Activated CD4-positive, alpha-beta T cell treated with anti-CD3 and anti-CD28 coated beads, Interleukin-2, amount 10 ng/mL, durations not matched to agents 7 days and 5 days (primary cell): ENCODE measurements at regions of chr3 and their contacts with region 1.

Region 1: DNA sequence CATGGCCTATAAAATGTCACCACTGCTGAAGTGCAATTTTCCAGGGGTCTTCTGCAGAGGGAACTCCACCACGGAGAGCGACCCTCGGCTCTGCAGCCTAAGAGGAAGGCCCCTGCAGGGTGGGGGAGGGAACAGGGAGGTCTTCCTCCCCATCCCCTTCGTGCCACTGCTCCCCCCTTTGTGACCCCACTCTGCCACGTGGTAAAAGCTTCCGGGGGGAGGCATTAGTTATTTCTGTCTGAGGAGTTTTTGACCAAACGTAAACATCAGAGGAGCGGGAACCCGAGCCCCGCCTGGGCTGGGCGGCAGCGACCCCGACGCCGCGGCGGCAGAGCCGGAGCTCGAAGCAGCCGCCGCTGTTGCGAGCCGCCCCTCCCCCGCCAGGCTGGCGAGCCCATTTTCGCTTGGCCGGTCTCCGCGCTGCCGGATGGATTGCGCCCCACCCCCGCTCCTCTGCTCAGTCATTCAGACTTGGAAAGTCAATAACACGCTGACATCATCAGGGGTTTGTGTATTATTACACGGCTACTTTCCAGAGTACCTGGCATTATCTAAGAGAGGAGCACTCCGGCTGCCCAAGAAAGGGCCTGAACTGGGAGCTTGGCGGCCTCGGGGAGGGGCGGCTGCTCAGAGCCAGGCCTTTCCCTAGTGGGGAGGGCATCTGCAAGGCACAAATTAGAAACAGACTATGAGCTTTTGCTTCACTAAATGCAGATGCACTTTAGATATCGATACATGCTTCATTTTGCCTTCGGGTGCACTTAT is 162.5 kb upstream of the TBL1XR1 start:
- DNase-seq: peak; percentile 93
- H3K4me3 Mint-ChIP-seq: peak overlapping the region; percentile 80
- H3K27ac Mint-ChIP-seq: peak overlapping the region; percentile 99
- H3K4me1 Mint-ChIP-seq: peaks cover 55% of the 10 kb centered on the region
- H3K27me3 Mint-ChIP-seq: no peaks in the 10 kb centered on the region

Region 2: DNA sequence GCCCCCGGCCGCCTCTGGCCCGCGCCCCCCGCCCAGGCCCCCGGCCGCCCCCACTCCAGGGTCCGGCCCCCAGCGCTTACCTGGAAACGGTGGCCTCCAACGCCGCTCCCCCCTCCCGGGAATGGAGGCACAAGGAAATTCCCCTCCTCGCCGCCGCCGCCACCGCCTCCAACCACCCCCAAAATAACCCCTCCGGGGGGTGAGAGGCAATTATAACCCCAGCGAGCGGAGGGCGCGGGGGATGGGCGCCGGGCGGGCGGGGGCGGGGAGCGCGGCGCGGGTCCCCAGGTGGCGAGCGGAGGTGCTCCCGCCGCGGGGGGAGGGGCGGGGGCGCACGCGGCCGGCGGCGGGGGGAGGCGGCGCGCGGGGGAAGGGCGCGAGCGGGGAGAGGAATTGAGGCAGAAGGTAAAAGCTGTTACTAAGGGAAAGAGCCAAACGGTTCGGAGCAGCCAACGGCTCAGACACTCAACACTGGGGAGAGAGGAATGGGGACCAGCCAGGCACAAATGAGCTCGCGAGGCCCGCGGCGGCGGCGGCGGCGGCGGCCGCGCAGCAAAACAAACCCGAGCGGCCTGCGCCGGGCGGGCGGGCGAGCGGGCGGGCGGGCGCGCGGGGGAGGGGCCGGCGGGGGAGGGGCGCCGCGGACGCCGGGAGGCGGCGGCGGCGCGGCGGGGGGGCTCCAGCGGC is 162.6 kb before region 1 on chr3 and contains the start of gene TBL1XR1:
- CTCF ChIA-PET with region 1: interaction called, 9 read pairs
- POLR2A ChIA-PET with region 1: interaction called, 13 read pairs
- DNase-seq: peak; percentile 91
- H3K4me3 Mint-ChIP-seq: peak within 1 kb of the TSS; percentile 99
- H3K27ac Mint-ChIP-seq: peak within 1 kb of the TSS; percentile 100
- H3K4me1 Mint-ChIP-seq: peaks cover 69% of the 10 kb centered on the region
- H3K27me3 Mint-ChIP-seq: no peaks in the 10 kb centered on the region
- total RNA-seq, gene TBL1XR1: 167 to 169 TPM

Region 3: GRCh38 chr3:177294221-177294620 is 65.6 kb before region 1 on chr3:
- CTCF ChIA-PET with region 1: no interaction called
- POLR2A ChIA-PET with region 1: no interaction called
- DNase-seq: no peak
- H3K4me3 Mint-ChIP-seq: no peak overlapping the region
- H3K27ac Mint-ChIP-seq: no peak overlapping the region
- H3K4me1 Mint-ChIP-seq: peaks cover 2% of the 10 kb centered on the region
- H3K27me3 Mint-ChIP-seq: no peaks in the 10 kb centered on the region